Activated CD4-positive, alpha-beta T cell treated with anti-CD3 and anti-CD28 coated beads for 36 hours (primary cell): ENCODE measurements at regions of chr12 and their contacts with region 1.

Region 1: DNA sequence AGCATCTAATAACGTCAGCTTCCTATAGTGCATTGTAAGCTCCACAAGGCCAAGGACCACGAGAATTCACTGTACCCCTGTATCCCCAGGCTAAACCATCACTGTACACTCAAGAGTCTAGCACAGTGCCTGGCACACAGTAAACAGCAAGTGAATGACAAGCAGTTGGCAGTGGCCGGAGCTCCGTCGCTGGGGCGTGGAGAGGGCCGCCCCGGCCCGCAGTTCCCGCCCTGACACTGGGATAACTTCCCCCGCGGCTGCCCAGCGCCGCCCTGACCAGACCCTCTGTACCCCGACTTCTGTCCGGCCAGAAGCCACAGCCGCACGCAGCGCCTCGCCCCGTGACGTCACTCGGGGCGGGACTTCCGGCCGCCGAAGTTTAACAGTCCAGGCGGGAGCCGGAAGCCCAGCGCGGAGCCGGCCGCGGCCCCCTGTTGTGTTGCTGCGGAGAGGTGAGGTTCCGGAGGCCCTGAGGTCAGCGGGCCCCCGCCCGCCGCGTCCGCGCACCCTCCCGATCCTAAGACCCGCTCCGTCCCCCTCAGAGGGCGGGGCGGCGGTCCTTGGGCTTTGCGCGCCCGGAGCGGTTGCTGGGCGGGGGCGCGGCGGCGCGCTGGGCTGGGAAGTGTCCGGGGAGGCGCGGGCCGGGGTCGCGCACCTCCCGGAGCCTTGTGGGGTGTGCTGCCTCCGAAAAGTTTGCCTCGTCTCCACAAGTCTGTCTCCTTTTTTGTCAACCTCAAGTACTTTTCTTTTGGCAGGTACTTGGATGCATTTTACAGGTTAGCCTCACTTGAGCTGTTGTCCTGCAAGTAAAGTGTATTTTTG is at the start of gene NEDD1:
- DNase-seq: peak; percentile 89
- ATAC-seq: peak; percentile 84
- H3K4me3 Mint-ChIP-seq: peak within 1 kb of the TSS; percentile 84
- H3K27ac Mint-ChIP-seq: peak within 1 kb of the TSS; percentile 97
- H3K4me1 Mint-ChIP-seq: peaks cover 38% of the 10 kb centered on the region
- H3K27me3 Mint-ChIP-seq: no peaks in the 10 kb centered on the region
- total RNA-seq, gene NEDD1: 57.9 to 69.3 TPM

Region 2: GRCh38 chr12:95858479-95859343 is 1048.3 kb before region 1 on chr12 and contains the start of gene SNRPF:
- CTCF ChIA-PET with region 1: no interaction called
- POLR2A ChIA-PET with region 1: no interaction called
- intact Hi-C with region 1: loop called (anchors 1 to 2 kb)
- DNase-seq: peak; percentile 95
- ATAC-seq: peak; percentile 95
- H3K4me3 Mint-ChIP-seq: no peak within 1 kb of the TSS
- H3K27ac Mint-ChIP-seq: peak within 1 kb of the TSS; percentile 59
- H3K4me1 Mint-ChIP-seq: peaks cover 28% of the 10 kb centered on the region
- H3K27me3 Mint-ChIP-seq: peaks cover 3% of the 10 kb centered on the region
- total RNA-seq, gene SNRPF: 23.1 to 61.1 TPM

Region 3: GRCh38 chr12:96719660-96720363 is 187.2 kb before region 1 on chr12:
- CTCF ChIA-PET with region 1: no interaction called
- POLR2A ChIA-PET with region 1: no interaction called
- intact Hi-C with region 1: loop called (anchors 2 to 5 kb)
- DNase-seq: peak; percentile 45
- ATAC-seq: peak; percentile 86
- H3K4me3 Mint-ChIP-seq: peak overlapping the region; percentile 75
- H3K27ac Mint-ChIP-seq: peak overlapping the region; percentile 91
- H3K4me1 Mint-ChIP-seq: peaks cover 9% of the 10 kb centered on the region
- H3K27me3 Mint-ChIP-seq: no peaks in the 10 kb centered on the region

Region 4: DNA sequence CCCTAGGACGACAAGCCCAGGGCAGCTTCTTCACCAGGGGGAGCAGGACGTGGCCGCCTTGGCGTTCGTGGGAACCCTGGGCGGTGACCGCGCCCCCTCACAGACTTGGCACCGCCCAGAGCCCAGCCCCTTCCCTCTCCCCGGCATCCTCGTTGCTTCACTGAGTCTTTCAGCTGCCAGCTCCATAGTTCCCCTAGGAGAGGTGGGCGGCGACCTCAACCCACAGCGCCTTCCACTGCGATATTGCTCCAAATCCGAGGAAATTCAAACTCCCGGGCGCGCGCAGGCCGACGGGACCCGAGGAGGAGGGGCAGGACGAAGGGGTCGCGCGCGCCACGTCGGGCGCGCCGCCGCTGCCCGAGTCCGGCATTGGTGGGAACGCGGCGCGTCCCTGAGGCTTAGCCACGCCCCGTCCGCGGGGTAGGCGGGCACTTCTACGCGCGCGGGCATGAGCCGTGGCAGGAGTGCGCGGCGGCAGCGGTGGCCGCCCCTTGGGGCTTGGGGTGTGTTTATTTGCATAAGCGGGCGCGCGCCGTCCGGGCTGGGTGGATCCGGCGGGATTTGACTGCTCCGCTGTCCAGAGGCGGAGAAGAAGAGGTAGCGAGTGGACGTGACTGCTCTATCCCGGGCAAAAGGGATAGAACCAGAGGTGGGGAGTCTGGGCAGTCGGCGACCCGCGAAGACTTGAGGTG is 1737.8 kb after region 1 on chr12 and contains the starts of genes APAF1 and IKBIP:
- CTCF ChIA-PET with region 1: no interaction called
- POLR2A ChIA-PET with region 1: no interaction called
- intact Hi-C with region 1: loop called in 1 of 2 experiments (anchors 5 kb)
- DNase-seq: peak; percentile 98
- ATAC-seq: peak; percentile 92
- H3K4me3 Mint-ChIP-seq: peak within 1 kb of the TSS; percentile 91
- H3K27ac Mint-ChIP-seq: peak within 1 kb of the TSS; percentile 94
- H3K4me1 Mint-ChIP-seq: peaks cover 16% of the 10 kb centered on the region
- H3K27me3 Mint-ChIP-seq: no peaks in the 10 kb centered on the region
- total RNA-seq, gene APAF1: 16.5 to 17.4 TPM
- total RNA-seq, gene IKBIP: 20.1 to 27.0 TPM